ENCODE measurements at regions of chr4 and their contacts with region 1.

Region 1: GRCh38 chr4:166501941-166502382 is 628.9 kb downstream of the TLL1 start:
- DNase-seq: peak; percentile 56 to 67
- H3K4me3 ChIP-seq: no peak overlapping the region
- H3K27ac ChIP-seq: no peak overlapping the region
- H3K4me1 ChIP-seq: peaks cover 0 to 4% (median under 1%) of the 10 kb centered on the region in 4 experiments; a peak in 4 of 7 replicates
- H3K27me3 ChIP-seq: no peaks in the 10 kb centered on the region; a peak in 1 of 7 replicates
- CTCF ChIP-seq: peak; percentile 70 to 92 (median 73)
- EP300 ChIP-seq: no peak
- POLR2A ChIP-seq: no peak
- RAD21 ChIP-seq: peak; percentile 78 to 86

Region 2: DNA sequence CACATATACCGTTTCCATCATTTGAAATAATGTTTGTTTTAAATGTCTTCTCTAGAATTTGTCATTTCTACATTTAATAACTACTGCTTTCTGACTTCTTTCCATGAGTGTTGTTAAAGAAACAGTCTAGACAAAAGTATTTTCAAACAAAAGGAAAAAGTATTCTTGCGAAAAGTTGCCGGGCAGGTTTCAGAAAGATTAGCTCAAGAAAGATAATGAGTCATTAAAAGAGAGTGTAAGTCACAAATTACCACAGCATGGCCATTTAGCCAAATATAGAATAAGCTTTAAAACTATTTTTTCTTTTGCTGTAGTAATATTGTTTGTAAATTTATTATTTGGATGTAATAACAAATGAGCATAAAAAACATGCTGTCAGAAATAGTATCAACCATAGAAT is 135.9 kb before region 1 on chr4:
- CTCF ChIA-PET with region 1: no interaction called
- POLR2A ChIA-PET with region 1: no interaction called
- DNase-seq: no peak
- H3K4me3 ChIP-seq: no peak overlapping the region
- H3K27ac ChIP-seq: no peak overlapping the region
- H3K4me1 ChIP-seq: no peaks in the 10 kb centered on the region; a peak in 1 of 7 replicates
- H3K27me3 ChIP-seq: no peaks in the 10 kb centered on the region
- CTCF ChIP-seq: no peak
- EP300 ChIP-seq: no peak
- POLR2A ChIP-seq: no peak
- RAD21 ChIP-seq: no peak

Region 3: GRCh38 chr4:166512267-166512666 is 10.3 kb after region 1 on chr4:
- CTCF ChIA-PET with region 1: interaction called, 28 read pairs
- POLR2A ChIA-PET with region 1: no interaction called
- DNase-seq: no peak
- H3K4me3 ChIP-seq: no peak overlapping the region
- H3K27ac ChIP-seq: no peak overlapping the region
- H3K4me1 ChIP-seq: no peaks in the 10 kb centered on the region
- H3K27me3 ChIP-seq: no peaks in the 10 kb centered on the region
- CTCF ChIP-seq: no peak
- EP300 ChIP-seq: no peak
- POLR2A ChIP-seq: no peak
- RAD21 ChIP-seq: no peak

Region 4: DNA sequence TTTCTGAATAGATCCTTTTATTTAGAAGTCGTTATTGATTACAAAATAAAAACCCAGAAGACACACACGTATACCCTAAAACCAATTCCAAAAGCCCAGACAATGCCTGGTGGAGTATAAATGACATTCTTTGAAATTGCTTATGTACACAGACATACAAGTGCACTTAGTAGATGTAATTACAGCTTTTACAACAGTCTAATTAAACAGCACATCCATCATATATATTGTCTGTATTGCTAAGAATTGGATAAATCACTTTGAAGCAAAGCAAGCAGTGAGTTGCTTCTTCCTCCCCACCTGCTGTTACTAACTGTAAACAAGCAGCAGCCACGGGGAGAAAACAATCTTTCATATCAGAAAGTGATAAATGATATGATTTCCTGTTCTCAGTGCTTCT is 16.8 kb after region 1 on chr4:
- CTCF ChIA-PET with region 1: interaction called, 28 read pairs
- POLR2A ChIA-PET with region 1: no interaction called
- DNase-seq: no peak
- H3K4me3 ChIP-seq: no peak overlapping the region
- H3K27ac ChIP-seq: no peak overlapping the region
- H3K4me1 ChIP-seq: no peaks in the 10 kb centered on the region
- H3K27me3 ChIP-seq: no peaks in the 10 kb centered on the region
- CTCF ChIP-seq: no peak
- EP300 ChIP-seq: no peak
- POLR2A ChIP-seq: no peak
- RAD21 ChIP-seq: no peak